ENCODE measurements at regions of chr5 and their contacts with region 1.

Region 1: DNA sequence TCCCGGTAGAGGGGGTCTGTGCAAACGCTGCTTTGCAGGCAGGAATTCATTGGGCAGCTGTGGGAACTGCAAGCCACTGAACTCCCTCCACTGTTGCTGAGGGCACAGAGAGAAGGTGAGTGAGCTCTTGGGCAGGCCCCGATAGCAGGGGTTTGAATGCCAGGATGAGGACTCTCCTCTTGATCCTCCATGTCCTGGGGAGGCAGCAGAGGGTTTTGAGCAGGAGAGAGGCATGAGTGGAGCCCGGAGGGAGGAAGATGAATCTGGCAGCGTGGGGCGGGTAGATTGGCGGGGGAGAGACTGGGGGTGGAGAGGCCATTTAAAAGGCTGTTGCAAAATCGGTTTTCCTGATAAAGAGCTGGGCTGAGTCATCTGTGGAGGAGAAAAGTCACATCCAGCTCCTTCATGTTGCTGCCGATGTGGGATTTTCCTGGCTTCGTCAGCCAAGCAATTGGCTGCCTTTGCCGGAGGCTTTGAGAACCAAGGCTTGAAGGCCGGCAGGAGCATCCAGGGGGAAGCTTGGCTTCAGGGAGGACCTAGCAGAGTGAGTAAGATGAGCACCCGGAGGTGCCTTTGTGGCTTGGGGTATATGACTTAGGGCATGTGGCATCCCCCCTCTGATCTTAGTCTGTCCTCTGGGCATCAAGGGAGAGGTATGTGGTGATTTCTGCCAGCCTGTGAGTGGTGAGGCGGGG is at the start of gene SYNPO:
- DNase-seq: peak; percentile 88
- total RNA-seq, gene SYNPO: 829 TPM

Region 2: DNA sequence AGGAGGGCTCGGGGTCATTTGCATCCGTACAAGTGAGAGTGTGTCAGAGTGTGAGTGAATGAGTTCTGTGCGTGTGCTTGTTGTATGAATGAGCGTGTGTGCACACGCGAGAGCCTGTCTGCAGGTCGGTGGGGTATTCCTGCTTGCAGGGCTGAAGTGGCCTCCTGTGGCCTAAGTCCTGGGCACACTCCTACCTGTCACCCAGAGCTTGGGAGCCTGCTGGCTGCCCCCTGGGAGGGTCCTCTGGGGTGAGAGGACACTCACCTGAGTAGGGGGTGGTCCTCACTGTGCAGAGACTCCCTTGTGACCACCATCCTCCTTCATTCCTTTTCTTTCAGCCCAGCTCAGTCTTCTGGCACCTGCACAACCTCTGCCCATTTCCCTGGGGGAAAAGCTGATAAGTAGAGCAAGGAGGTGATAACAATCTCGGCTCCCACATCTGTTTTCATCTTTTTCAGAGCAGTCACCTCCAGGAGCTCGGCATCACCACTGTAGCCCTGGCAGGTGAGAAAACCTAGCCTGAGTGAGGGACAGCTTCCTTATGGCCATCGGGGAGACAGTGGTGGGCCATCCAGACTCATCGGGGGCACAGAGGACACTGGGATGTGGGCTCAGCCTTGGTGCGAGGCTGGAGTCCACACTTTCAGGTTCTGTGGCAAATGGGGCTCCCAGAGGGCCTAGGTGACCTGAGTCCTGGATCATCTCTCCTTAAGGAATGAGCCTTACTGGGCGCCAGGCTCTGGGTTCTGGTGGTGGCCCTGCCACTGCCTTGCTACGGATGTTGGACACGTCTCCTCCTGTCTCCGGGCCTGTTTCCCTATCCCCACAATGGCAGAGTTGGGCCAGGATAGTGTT is 38.7 kb before region 1 on chr5:
- intact Hi-C with region 1: loop called (anchors 2 kb)
- DNase-seq: no peak

Region 3: DNA sequence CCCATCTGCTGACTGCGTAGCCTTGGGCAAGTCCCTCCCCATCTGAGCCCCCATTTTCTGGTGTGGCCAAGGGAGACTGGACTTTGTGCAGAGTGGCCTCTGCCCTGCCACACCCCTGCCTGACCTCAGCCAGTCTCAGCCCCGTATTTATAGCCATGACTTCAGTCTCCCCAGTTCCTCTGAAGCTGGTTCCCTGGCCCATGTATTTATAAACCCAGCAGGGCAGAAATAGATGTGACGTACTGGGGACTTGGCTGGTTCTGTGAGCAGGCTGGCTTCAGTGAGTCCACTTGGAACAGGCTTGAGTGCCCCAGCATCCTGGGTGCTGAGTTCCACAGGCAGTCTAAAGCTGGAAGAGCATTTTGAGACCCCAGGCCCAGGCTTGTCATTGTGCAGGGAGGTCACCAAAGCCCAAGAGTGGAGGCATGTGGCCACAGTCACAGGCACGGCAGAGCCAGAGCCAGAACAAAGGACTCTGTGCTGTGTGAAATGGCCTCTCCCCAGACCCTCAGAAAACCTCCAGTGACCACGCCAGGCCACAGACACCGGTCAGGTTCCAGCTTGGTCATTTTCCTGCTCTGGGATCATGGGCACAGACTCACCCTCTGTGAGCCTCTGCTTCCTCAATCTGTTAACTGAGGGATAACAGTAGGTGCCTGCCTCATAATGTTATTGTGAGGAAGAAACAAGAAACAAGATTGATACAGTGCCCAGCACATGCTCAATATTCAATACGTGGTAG is 30.4 kb before region 1 on chr5:
- intact Hi-C with region 1: loop called (anchors 2 kb)
- DNase-seq: no peak

Region 4: DNA sequence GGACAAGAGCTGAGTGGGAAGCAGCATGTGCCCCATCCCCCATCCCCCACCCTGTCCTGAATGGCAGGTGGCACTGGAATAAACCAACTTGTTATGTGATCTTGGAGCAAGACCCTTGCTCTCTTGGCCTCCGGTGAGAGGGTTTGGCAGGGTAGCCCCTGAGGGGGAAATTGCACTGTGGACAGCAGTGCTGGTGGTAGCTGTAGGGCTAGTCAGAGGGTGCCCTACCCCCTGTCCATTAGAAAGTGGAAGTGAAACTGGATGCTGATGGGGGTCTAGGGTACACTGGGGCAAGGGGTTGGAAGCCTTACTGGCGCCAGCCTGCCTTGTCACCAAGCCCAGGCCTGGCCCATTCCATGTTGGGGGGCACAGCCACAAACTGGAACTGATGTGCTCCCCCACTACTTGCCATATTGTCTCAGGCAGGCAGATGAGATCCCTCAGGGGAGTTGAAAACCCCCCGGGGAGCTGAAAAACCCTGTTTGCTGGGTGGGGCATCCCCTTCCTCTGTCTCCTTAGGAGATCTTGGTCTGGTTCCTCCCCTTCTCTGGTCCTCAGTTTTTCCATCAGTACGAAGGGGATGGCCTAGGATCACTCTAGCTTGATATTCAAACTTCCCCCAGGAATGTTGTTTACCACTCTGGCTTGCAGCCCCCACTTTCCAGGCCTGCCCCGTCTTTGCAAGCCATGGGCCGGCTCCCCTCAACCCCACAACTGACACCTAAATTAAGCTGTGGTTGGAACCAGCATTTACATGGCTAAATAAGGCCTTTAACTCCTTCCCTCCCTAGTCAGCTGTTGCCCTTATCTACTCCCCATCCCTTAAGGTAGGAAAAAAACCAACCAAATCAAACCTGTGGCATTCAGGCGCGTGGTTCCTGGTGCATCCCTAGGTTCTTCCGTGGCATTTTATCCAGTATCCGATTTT is 14.4 kb before region 1 on chr5:
- intact Hi-C with region 1: loop called (anchors 2 kb)
- DNase-seq: no peak

Region 5: DNA sequence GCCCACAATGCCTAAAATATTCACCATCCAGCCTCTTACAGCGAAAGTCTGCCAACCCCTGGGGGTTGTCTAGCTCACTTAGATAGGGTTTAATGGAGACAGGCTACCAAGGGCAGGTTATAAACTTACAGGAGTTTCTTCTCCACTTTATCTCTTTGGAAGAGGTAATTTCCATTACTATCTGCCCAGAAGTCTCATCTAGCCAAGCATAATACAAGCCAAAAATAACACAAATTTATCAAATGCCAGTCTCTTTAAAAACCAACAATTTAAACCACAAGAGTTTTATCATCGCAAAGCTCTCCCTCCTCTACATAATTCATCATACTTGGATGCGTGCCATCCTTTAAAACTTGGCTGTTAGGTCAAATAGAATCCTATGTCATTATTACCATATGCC is 54.2 kb after region 1 on chr5:
- intact Hi-C with region 1: no loop called
- DNase-seq: no peak

Measured in cardiac septum (tissue), 1 donor.